Common myeloid progenitor, CD34-positive (primary cell): ENCODE measurements at regions of chr1 and their contacts with region 1.

Region 1: GRCh38 chr1:101112051-101112780 is 86.6 kb upstream of the DPH5 start:
- DNase-seq: peak; percentile 91 to 98 (median 96)
- H3K4me3 ChIP-seq: peak overlapping the region in 5 of 7 experiments; percentile 3 to 48 (median 14)
- H3K27ac ChIP-seq: peak overlapping the region; percentile 77 to 89
- H3K4me1 ChIP-seq: peaks cover 24 to 43% (median 27%) of the 10 kb centered on the region in 4 experiments
- H3K27me3 ChIP-seq: no peaks in the 10 kb centered on the region

Region 2: GRCh38 chr1:101005871-101006270 is 106.3 kb before region 1 on chr1:
- CTCF ChIA-PET with region 1: no interaction called
- POLR2A ChIA-PET with region 1: no interaction called
- DNase-seq: peak in 1 of 3 donors; percentile 10
- H3K4me3 ChIP-seq: no peak overlapping the region
- H3K27ac ChIP-seq: no peak overlapping the region
- H3K4me1 ChIP-seq: peaks cover 8 to 22% (median 13%) of the 10 kb centered on the region in 4 experiments
- H3K27me3 ChIP-seq: no peaks in the 10 kb centered on the region

Region 3: DNA sequence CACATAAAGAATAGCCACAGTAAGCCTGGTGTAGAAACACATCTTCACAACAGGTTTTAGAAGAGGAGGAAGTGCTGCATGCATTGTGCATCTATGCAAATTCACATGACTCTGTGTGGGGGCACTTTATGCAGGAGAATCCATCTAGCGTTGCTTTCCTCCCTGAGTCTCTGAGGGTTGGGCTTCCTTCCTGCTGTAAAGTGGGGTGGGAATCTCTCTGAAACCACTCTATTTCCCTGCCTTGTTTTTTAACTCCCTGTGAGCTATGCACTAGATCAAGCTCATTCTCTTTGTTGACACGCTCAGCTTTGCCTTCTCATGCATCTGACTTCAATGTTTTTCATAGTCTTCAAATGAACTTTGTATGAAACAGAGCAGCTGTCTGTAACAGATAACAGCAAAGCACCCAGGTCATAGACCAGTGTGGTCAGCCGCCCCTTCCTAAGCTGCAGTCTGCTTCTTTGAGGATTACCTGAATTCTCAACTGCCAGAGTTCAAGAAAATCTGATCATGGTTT is 16.1 kb after region 1 on chr1:
- CTCF ChIA-PET with region 1: interaction called, 13 read pairs
- POLR2A ChIA-PET with region 1: interaction called, 3 read pairs
- DNase-seq: peak; percentile 65 to 91 (median 83)
- H3K4me3 ChIP-seq: peak overlapping the region in 5 of 7 experiments; percentile 1 to 54 (median 44)
- H3K27ac ChIP-seq: peak overlapping the region; percentile 34 to 80
- H3K4me1 ChIP-seq: peaks cover 16 to 22% (median 18%) of the 10 kb centered on the region in 4 experiments
- H3K27me3 ChIP-seq: no peaks in the 10 kb centered on the region